Stomach (tissue), 19 donors: ENCODE measurements at regions of chr18 and their contacts with region 1.

Region 1: GRCh38 chr18:42255908-42256765 is 301.1 kb downstream of the PIK3C3 start:
- DNase-seq: no peak
- H3K4me3 ChIP-seq: no peak overlapping the region
- H3K27ac ChIP-seq: no peak overlapping the region
- H3K4me1 ChIP-seq: no peaks in the 10 kb centered on the region
- H3K27me3 ChIP-seq: no peaks in the 10 kb centered on the region
- CTCF ChIP-seq: no peak
- EP300 ChIP-seq: no peak
- POLR2A ChIP-seq: no peak

Region 2: GRCh38 chr18:42155024-42155423 is 101.1 kb before region 1 on chr18:
- intact Hi-C with region 1: no loop called
- DNase-seq: no peak
- H3K4me3 ChIP-seq: no peak overlapping the region
- H3K27ac ChIP-seq: no peak overlapping the region
- H3K4me1 ChIP-seq: no peaks in the 10 kb centered on the region
- H3K27me3 ChIP-seq: no peaks in the 10 kb centered on the region
- CTCF ChIP-seq: no peak
- EP300 ChIP-seq: no peak
- POLR2A ChIP-seq: no peak

Region 3: DNA sequence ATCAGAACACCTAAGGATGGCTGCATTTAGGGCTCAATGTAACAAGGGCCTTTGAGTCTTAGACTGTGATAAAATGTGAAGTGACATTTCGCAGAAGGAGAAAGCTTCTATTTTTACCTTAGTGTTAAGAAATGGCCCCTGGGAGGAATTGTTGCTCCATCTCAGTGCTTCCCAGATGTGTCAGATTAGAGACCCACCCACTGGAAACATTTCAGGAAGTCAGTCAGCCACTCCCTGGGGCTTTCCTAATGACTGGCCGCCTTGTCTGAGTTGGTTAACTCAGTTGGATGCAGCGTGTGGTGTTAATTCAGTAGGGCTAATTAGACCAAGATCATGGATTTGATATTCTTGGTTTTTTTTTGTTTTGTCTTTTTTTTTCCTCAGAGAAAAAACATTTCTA is 54.8 kb after region 1 on chr18:
- intact Hi-C with region 1: loop called (anchors 10 kb)
- DNase-seq: no peak
- H3K4me3 ChIP-seq: no peak overlapping the region
- H3K27ac ChIP-seq: no peak overlapping the region
- H3K4me1 ChIP-seq: no peaks in the 10 kb centered on the region
- H3K27me3 ChIP-seq: no peaks in the 10 kb centered on the region
- CTCF ChIP-seq: no peak
- EP300 ChIP-seq: no peak
- POLR2A ChIP-seq: no peak

Region 4: GRCh38 chr18:43220691-43221090 is 964.6 kb after region 1 on chr18:
- intact Hi-C with region 1: no loop called
- DNase-seq: no peak
- H3K4me3 ChIP-seq: no peak overlapping the region
- H3K27ac ChIP-seq: no peak overlapping the region
- H3K4me1 ChIP-seq: no peaks in the 10 kb centered on the region
- H3K27me3 ChIP-seq: no peaks in the 10 kb centered on the region
- CTCF ChIP-seq: no peak
- EP300 ChIP-seq: no peak
- POLR2A ChIP-seq: no peak